PC-3 (cell line): ENCODE measurements at regions of chr7 and their contacts with region 1.

Region 1: GRCh38 chr7:104156842-104157277 is 51.0 kb downstream of the ORC5 start:
- DNase-seq: peak; percentile 61
- ATAC-seq: 0 out of 2 replicates have a peak, but pooled peaks have one; percentile 45
- H3K4me3 ChIP-seq: no peak overlapping the region
- H3K27ac ChIP-seq: no peak overlapping the region
- H3K4me1 ChIP-seq: no peaks in the 10 kb centered on the region
- H3K27me3 ChIP-seq: no peaks in the 10 kb centered on the region
- CTCF ChIP-seq: peak; percentile 84

Region 2: GRCh38 chr7:103447073-103447951 is 709.5 kb before region 1 on chr7:
- CTCF ChIA-PET with region 1: no interaction called
- POLR2A ChIA-PET with region 1: interaction called, 9 read pairs
- intact Hi-C with region 1: loop called (anchors 1 kb)
- DNase-seq: peak; percentile 75
- ATAC-seq: peak; percentile 66
- H3K4me3 ChIP-seq: peak overlapping the region; percentile 71
- H3K27ac ChIP-seq: no peak overlapping the region
- H3K4me1 ChIP-seq: peaks cover 17% of the 10 kb centered on the region
- H3K27me3 ChIP-seq: no peaks in the 10 kb centered on the region
- CTCF ChIP-seq: peak; percentile 90

Region 3: DNA sequence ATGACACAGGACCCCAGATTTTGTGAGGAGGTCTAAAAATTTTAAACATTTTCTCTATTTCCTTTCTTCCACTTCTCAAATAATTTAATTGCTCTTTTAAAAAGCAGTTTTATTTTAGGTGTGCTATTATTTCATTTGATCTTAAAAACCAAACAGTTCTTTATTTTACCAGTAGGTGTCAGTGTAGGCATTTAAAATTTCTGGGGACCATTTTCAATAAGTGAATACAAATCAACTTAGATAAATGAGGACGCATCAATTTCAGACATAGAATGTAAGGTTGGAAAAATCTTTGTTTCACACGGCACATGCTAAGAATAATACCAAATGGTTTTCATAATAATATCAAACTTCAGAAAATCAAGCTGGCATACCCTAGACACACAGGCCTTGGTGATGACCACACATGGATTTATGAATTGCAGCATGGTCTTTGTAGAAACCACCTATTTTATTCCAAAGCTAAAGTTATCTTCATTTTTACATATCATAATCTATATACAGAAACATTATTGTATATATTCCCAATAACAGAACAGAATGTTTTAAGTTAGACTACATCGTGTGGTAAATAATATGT is 583.3 kb before region 1 on chr7:
- CTCF ChIA-PET with region 1: no interaction called
- POLR2A ChIA-PET with region 1: no interaction called
- intact Hi-C with region 1: loop called (anchors 2 kb)
- DNase-seq: peak; percentile 78
- ATAC-seq: no peak; the same call in none of the 2 replicates
- H3K4me3 ChIP-seq: no peak overlapping the region
- H3K27ac ChIP-seq: no peak overlapping the region
- H3K4me1 ChIP-seq: no peaks in the 10 kb centered on the region
- H3K27me3 ChIP-seq: no peaks in the 10 kb centered on the region
- CTCF ChIP-seq: peak; percentile 80

Region 4: DNA sequence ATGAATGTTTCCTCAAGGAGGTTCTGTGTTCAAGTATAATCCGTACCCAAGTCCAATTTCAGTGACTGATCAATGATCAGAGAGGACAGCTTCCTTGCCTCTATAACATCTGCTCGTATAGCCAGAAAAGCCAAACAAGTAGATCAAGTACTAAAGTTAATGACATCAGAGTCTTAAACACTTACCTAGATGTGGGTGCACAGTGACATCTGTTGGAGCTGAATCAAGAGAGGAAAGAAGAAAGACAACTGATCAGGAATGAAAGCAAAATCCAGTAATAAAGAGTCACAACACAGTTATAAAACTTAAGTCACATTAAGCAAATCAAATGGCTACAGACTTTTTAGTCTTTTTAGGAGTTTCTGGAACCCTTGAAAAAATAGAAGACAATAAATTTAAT is 403.9 kb before region 1 on chr7:
- CTCF ChIA-PET with region 1: no interaction called
- POLR2A ChIA-PET with region 1: no interaction called
- intact Hi-C with region 1: loop called (anchors 10 kb)
- DNase-seq: peak; percentile 69
- ATAC-seq: peak; percentile 90
- H3K4me3 ChIP-seq: no peak overlapping the region
- H3K27ac ChIP-seq: no peak overlapping the region
- H3K4me1 ChIP-seq: peaks cover 3% of the 10 kb centered on the region; the same call in 1 of the 2 replicates
- H3K27me3 ChIP-seq: no peaks in the 10 kb centered on the region
- CTCF ChIP-seq: peak; percentile 65

Region 5: GRCh38 chr7:104106108-104106905 is 50.6 kb before region 1 on chr7:
- CTCF ChIA-PET with region 1: interaction called, 4 read pairs
- POLR2A ChIA-PET with region 1: no interaction called
- intact Hi-C with region 1: loop called (anchors 1 kb)
- DNase-seq: peak; percentile 15
- ATAC-seq: peak; percentile 83
- H3K4me3 ChIP-seq: no peak overlapping the region
- H3K27ac ChIP-seq: no peak overlapping the region
- H3K4me1 ChIP-seq: no peaks in the 10 kb centered on the region
- H3K27me3 ChIP-seq: no peaks in the 10 kb centered on the region
- CTCF ChIP-seq: peak; percentile 37; the same call in 1 of the 2 replicates

Region 6: DNA sequence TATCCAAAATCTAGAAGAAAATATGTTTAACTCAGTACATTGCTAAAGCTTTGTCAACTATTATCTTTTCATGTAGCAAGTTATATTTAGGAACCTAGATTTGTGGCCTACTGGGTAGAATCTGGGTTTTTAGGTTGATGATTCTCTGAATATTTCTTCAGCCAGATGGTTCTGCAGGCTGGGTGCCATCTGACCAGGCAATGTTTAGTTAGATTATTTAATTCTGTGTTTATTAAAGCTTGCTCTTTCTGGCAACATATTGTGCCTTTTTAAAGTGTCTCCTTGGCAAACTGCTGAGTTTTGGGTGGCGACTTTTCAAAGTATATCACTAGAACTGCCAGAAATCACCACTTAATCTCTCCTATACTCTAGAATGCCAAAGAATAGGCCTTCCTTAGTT is 285.6 kb after region 1 on chr7:
- CTCF ChIA-PET with region 1: no interaction called
- POLR2A ChIA-PET with region 1: no interaction called
- intact Hi-C with region 1: no loop called
- DNase-seq: no peak
- ATAC-seq: no peak
- H3K4me3 ChIP-seq: no peak overlapping the region
- H3K27ac ChIP-seq: no peak overlapping the region
- H3K4me1 ChIP-seq: no peaks in the 10 kb centered on the region
- H3K27me3 ChIP-seq: peaks cover 34% of the 10 kb centered on the region
- CTCF ChIP-seq: no peak